ENCODE measurements at regions of chr5 and their contacts with region 1.

Region 1: GRCh38 chr5:134555890-134556311 is 30.4 kb downstream of the JADE2 start:
- DNase-seq: peak; percentile 85
- ATAC-seq: no peak

Region 2: GRCh38 chr5:134568761-134569695 is 13.1 kb after region 1 on chr5:
- intact Hi-C with region 1: loop called (anchors 1 kb)
- DNase-seq: peak; percentile 90
- ATAC-seq: peak; percentile 78

Region 3: GRCh38 chr5:134887593-134888159 is 331.8 kb after region 1 on chr5:
- intact Hi-C with region 1: no loop called
- DNase-seq: no peak
- ATAC-seq: no peak